Heart right ventricle (tissue), 16 donors: ENCODE measurements at regions of chr9 and their contacts with region 1.

Region 1: DNA sequence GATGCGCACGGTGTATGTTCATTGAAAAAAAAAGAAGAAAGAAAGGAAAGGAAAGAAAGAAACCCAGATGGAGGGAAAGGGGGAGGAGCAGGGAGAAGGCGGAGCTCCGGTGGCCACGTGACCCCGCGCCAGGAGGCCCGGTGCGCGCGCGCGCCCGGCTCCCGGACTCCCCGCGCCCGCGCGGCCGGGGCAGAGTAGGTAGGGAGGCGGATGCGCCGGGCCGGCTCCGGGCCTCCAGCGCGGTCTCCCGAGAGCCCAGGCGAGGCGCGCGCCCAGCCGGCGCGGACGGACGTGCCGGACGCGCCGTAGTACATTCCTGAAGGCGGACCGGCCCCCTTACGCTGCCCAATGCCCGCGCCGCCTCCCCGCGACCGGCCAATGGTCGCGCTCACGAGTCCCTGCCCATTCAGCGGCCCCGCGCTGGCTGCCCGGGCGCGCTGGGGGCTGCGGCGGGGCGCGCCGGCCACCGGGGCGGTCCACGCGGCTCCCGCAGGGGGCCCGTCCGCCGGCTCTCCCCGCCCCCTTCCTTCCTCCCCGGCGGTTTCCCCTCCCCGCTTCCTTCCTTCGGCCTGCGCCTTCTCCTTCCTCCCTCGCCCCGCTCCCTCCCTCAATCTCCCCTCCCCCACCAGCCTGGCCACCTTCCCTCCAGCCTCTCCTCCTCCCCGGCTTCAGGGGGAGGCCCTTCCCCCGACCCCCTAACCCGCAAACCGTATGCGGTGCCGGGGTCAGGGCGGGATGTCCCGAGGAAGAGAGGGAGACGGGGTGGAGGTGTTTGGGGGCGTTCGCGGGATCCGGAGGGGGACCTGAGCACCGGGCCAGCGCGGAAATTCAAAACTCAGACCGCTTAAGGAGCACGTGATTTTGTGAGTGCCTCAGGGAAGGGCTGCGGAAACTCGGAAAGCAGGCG is 5.8 kb downstream of the PTCH1 start:
- DNase-seq: peak; percentile 88 to 90
- ATAC-seq: peak; percentile 73 to 90 (median 78)
- H3K4me3 ChIP-seq: peak overlapping the region; percentile 69 to 97 (median 82)
- H3K27ac ChIP-seq: peak overlapping the region; percentile 64 to 99 (median 92)
- H3K4me1 ChIP-seq: peaks cover 5 to 40% (median 24%) of the 10 kb centered on the region in 9 donors
- H3K27me3 ChIP-seq: peaks cover 0 to 89% (median 0%) of the 10 kb centered on the region in 7 donors
- CTCF ChIP-seq: no peak

Region 2: GRCh38 chr9:95425910-95426551 is 84.9 kb before region 1 on chr9:
- intact Hi-C with region 1: loop called in 1 of 10 experiments (anchors 5 kb)
- DNase-seq: no peak
- ATAC-seq: peak in 2 of 8 donors; percentile 12 to 20
- H3K4me3 ChIP-seq: peak overlapping the region; percentile 4 to 56 (median 50)
- H3K27ac ChIP-seq: peak overlapping the region in 7 of 10 donors; percentile 59 to 78 (median 74)
- H3K4me1 ChIP-seq: peaks cover 0 to 11% (median 7%) of the 10 kb centered on the region in 9 donors
- H3K27me3 ChIP-seq: peaks cover 0 to 28% (median 0%) of the 10 kb centered on the region in 7 donors
- CTCF ChIP-seq: no peak

Region 3: DNA sequence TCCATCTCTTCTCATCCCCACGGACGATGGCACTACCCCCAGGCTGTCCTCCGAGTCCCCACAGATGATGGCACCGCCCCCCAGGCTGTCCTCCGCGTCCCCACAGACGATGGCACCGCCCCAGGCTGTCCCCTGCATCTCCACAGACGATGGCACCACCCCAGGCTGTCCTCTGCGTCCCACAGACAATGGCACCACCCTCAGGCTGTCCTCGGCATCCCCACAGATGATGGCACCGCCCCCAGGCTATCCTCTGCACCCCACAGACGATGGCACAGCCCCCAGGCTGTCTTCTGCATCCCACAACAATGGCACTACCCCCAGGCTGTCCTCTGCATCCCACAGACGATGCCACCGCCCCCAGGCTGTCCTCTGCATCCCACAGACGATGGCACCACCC is 63.2 kb after region 1 on chr9:
- intact Hi-C with region 1: loop called in 1 of 10 experiments (anchors 10 kb)
- DNase-seq: no peak
- ATAC-seq: no peak
- H3K4me3 ChIP-seq: no peak overlapping the region
- H3K27ac ChIP-seq: no peak overlapping the region
- H3K4me1 ChIP-seq: peaks cover 0 to 10% (median 0%) of the 10 kb centered on the region in 9 donors
- H3K27me3 ChIP-seq: peaks cover 3 to 51% (median 29%) of the 10 kb centered on the region in 7 donors
- CTCF ChIP-seq: no peak

Region 4: DNA sequence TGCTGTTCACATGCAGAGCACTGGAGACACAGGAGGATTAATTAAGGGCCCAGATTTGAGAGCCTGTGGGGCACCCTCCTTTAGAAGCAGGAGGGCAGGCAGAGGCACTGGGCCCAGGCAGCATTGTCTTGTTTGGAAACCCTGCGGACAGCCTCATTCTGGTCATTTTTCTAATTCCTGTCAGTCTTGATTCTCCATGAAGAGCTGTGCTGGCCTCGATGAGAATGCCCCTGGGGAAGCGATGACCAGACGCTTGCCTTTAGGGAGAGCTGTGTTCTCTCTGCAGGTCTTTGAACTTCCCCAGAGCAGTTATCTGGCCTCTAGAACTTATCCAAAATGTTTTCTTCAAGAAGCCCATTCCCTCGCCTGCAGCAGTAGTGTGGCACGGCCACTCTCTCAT is 123.6 kb after region 1 on chr9:
- intact Hi-C with region 1: loop called in 3 of 10 experiments (anchors 5 to 10 kb)
- DNase-seq: no peak
- ATAC-seq: no peak
- H3K4me3 ChIP-seq: no peak overlapping the region
- H3K27ac ChIP-seq: no peak overlapping the region
- H3K4me1 ChIP-seq: no peaks in the 10 kb centered on the region
- H3K27me3 ChIP-seq: peaks cover 0 to 5% (median 0%) of the 10 kb centered on the region in 7 donors
- CTCF ChIP-seq: no peak